Panc1 (cell line): ENCODE measurements at regions of chr5 and their contacts with region 1.

Region 1: GRCh38 chr5:84752780-84753179 is 368.1 kb upstream of the EDIL3 start:
- DNase-seq: no peak
- ATAC-seq: no peak
- H3K4me3 ChIP-seq: no peak overlapping the region
- H3K27ac ChIP-seq: no peak overlapping the region
- H3K4me1 ChIP-seq: no peaks in the 10 kb centered on the region
- H3K27me3 ChIP-seq: no peaks in the 10 kb centered on the region
- CTCF ChIP-seq: no peak

Region 2: DNA sequence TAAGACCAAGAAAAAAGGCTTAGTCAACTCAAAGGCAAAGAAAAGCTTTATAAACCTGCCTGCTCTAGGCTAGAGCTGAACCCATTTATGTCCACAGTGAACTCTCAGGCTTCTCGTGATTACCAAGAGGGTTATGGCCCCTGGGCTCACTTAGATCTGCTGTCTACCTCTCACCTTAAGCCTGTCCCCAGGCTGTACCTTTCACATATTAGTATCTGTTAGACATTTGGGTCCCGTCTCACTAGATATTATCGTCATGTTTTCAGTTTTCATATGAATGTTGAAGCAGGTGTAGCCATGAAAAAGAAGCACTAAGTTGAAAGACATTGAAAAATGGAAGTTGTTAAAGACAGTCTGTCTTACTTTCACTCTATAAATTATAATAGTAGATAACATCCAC is 1789.8 kb after region 1 on chr5:
- CTCF ChIA-PET with region 1: no interaction called
- POLR2A ChIA-PET with region 1: no interaction called
- in situ Hi-C with region 1: no loop called
- intact Hi-C with region 1: loop called (anchors 10 kb)
- DNase-seq: no peak
- ATAC-seq: no peak
- H3K4me3 ChIP-seq: no peak overlapping the region
- H3K27ac ChIP-seq: no peak overlapping the region
- H3K4me1 ChIP-seq: no peaks in the 10 kb centered on the region
- H3K27me3 ChIP-seq: no peaks in the 10 kb centered on the region
- CTCF ChIP-seq: no peak